Left cardiac atrium (tissue), 4 donors: ENCODE measurements at regions of chr19 and their contacts with region 1.

Region 1: DNA sequence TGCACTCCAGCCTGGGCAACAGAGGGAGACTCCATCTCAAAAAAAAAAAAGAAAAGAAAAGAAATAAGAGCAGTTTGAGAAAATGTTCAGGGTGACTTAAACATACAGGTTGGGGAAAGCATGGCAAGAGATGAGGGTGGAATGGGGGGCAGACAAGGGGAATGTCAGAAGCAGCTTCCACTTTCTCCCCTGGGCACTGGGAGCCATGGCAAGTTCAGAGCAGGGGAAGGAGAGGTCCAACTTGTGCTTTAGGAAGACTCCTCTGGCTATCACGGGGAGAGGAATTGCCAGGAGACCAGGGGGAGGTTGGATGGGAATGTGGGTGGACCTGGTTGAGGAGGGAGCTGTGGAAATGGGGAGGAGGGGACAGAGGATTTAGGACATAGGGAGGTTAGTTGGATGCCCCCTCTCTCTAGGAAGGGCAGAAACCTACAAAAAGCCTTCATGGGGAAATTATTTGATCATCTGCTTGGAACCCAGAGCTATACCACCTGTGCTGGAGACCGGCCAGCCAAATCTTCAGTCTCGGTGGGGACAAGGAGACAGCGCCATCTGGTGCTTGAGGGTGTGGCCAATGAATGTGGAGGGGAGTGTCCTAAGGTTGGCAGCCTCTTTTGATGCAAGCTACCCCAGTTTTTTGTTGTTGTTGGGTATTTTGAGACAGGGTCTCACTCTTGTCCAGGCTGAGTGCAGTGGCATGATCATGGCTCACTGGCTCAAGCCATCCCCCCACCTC is 7.3 kb upstream of the STRN4 start:
- DNase-seq: no peak
- ATAC-seq: no peak

Region 2: DNA sequence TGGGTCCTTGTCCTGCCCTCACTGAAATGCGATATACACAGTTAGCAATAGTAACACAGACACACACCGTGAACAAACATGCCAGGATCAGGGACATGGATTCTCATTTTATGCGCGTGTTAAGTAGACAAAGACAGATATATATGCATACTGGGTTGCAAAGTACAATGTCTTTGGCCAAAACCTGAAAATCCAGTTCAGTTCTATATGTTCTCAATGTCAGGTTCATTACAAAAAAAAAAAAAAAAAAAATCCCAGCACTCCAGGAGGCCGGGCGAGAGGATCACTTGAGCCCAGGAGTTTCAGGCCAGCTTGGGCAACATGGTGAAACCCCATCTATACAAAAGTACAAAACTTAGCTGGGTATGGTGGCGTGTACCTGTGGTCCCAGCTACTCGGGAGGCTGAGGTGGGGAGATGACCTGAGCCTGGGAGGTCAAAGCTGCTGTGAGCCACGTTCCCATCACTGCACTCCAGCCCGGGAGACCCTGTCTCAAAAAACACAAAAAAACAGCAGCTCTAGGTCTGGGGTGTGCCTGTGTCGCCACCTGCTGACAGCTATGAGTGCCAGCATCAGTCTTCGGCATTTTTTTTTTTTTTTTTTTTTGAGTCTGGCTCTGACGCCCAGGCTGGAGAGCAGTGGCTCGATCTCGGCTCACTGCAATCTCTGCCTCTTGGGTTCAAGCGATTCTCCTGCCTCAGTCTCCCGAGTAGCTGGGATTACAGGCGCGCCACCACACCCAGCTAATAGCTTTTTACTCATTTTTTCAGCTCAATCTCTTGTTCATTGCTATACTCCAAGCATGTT is 86.8 kb after region 1 on chr19:
- intact Hi-C with region 1: loop called (anchors 1 to 2 kb)
- DNase-seq: peak; percentile 61
- ATAC-seq: peak; percentile 61 to 62